Panc1 (cell line): ENCODE measurements at regions of chr7 and their contacts with region 1.

Region 1: DNA sequence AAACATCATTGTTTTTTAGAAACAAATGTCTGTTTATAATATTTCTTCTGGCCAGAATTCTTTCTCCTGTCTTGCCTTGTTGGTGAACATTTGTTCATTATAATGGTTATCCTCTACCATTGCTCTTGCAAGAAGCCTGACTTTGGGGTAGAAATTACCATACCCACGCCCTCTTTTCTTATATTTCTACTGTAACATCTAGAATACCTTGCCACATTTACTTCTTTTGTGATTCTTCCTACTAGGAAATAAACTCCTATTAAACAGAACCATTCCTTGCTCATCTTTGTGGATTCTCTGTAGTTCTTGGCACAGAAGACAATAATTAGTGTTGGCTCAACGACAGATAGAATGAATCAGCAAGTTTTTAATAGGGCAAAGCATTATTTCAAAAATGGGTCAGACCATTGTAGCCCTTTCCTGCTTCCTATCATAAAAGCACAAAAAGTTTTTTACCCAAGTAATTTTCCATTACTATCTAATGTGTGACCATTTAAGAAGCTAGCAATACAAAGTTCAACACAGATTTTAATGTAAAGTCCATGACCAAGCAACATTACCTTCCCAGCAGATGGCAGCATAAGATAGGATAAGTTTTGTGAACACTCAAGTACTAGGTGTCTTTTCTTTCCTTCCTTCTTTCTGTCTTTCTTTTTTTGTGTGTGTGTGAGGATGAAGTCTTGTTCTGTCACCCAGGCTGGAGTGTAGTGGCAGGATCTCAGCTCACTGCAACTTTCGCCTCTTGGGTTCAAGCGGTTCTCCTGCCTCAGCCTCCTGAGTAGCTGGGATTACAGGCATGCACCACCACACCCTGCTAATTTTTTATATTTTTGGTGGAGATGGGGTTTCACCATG is 270.4 kb downstream of the HGF start:
- DNase-seq: peak; percentile 85
- ATAC-seq: peak; percentile 93
- H3K4me3 ChIP-seq: no peak overlapping the region
- H3K27ac ChIP-seq: peak overlapping the region; percentile 36; the same call in 1 of the 2 replicates
- H3K4me1 ChIP-seq: peaks cover 6% of the 10 kb centered on the region
- H3K27me3 ChIP-seq: no peaks in the 10 kb centered on the region
- CTCF ChIP-seq: peak; percentile 67

Region 2: DNA sequence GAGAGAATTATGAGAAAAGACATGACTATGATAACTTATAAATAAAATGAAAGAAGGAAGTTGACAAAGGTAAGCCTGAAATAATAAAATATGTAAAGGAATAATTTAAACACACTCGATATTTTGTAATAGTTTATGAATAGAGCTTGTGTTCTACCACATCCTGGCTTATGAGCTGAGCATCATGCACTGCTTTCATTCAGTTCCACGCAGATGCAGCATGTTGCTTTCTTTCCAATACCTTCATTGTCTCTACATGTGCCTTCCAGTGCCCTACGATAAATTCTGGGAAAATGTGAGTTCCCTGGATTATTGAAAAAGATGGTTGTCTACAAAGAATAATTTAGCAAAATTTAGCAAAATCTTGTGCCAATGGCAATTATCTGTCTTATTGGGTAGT is 181.7 kb before region 1 on chr7:
- CTCF ChIA-PET with region 1: no interaction called
- POLR2A ChIA-PET with region 1: no interaction called
- in situ Hi-C with region 1: no loop called
- intact Hi-C with region 1: no loop called
- DNase-seq: no peak
- ATAC-seq: no peak
- H3K4me3 ChIP-seq: no peak overlapping the region
- H3K27ac ChIP-seq: peak overlapping the region; percentile 49; the same call in 1 of the 2 replicates
- H3K4me1 ChIP-seq: peaks cover 7% of the 10 kb centered on the region
- H3K27me3 ChIP-seq: no peaks in the 10 kb centered on the region
- CTCF ChIP-seq: no peak

Region 3: DNA sequence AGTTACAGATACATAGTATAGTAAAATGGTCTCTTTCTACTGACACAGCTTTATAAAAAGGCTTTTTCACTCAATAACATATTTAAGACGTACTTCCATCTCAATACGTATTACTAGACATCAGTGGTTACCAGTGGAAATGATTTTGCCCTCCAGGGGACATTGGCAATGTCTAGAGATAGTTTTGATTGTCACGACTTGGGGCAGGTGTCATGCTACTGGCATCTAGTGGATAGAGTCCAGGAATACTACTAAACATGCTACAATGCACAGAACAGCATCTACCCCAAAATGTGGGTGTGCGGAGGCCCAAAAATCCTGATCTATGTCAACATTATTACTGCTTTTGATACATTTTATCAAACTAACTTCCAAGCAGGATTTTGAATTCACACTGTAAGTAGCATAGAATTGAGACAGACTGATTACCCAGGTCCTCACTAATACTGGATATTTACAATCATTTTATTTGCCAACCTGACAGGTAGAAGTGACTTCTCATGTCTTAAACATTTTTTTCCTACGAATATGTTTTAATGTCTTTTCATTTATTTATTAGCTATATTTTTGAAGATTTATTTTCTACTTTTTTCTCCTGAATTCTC is 216.6 kb after region 1 on chr7:
- CTCF ChIA-PET with region 1: interaction called, 7 read pairs
- POLR2A ChIA-PET with region 1: no interaction called
- in situ Hi-C with region 1: no loop called
- intact Hi-C with region 1: loop called (anchors 1 kb)
- DNase-seq: peak; percentile 81
- ATAC-seq: peak; percentile 90
- H3K4me3 ChIP-seq: no peak overlapping the region
- H3K27ac ChIP-seq: no peak overlapping the region
- H3K4me1 ChIP-seq: no peaks in the 10 kb centered on the region; the same call in 1 of the 2 replicates
- H3K27me3 ChIP-seq: no peaks in the 10 kb centered on the region
- CTCF ChIP-seq: peak; percentile 79

Region 4: DNA sequence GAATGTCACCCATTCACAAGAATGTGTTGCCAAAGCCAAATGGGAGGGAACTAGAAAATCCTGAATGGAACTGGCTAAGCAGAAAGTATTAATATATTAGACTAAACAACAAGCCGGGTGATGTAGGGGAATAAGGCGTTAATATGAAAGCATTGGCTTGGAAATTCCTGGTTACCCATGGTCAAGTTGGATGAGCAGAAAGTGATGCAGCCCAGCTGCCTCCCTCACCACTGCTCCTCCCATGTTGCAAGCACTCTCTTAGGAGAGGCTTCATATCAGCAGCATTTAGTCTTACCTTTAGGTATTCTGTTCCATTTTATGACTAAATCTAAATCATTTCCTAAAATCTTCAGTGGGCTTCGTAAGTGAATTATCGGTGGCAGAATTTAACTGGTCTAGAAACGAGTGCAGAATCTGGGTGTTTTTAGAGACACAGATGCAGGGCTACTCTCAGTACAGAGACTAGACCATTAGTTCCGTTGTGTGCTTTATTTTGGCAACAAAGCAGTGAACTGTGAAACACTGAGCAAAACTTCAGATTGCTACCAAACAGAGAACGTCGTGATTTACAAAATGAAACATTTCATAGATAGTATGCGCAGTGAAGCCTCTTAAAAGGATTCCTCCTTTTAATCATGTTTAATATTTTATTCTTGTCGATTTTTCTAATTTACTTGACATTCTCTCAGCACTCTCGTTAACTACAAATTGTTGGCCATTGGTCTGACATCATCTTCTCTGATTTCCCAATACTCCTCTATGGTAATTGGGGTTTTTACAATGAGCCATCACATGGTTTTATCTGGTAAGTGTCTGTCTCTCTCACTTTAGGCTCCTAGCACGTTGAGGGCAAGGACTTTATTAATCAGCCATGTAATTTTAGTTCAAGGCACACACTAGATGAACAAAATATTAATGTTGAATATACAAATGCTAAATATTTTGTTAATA is 292.4 kb after region 1 on chr7:
- CTCF ChIA-PET with region 1: no interaction called
- POLR2A ChIA-PET with region 1: no interaction called
- in situ Hi-C with region 1: no loop called
- intact Hi-C with region 1: no loop called
- DNase-seq: no peak
- ATAC-seq: no peak
- H3K4me3 ChIP-seq: no peak overlapping the region
- H3K27ac ChIP-seq: no peak overlapping the region
- H3K4me1 ChIP-seq: no peaks in the 10 kb centered on the region
- H3K27me3 ChIP-seq: no peaks in the 10 kb centered on the region
- CTCF ChIP-seq: no peak

Region 5: GRCh38 chr7:81956520-81956919 is 457.0 kb after region 1 on chr7:
- CTCF ChIA-PET with region 1: interaction called, 10 read pairs
- POLR2A ChIA-PET with region 1: no interaction called
- in situ Hi-C with region 1: no loop called
- intact Hi-C with region 1: loop called (anchors 1 kb)
- DNase-seq: peak; percentile 18
- ATAC-seq: peak; percentile 76; the same call in 1 of the 2 replicates
- H3K4me3 ChIP-seq: no peak overlapping the region
- H3K27ac ChIP-seq: no peak overlapping the region
- H3K4me1 ChIP-seq: no peaks in the 10 kb centered on the region
- H3K27me3 ChIP-seq: no peaks in the 10 kb centered on the region
- CTCF ChIP-seq: peak; percentile 62; the same call in 1 of the 2 replicates

Region 6: GRCh38 chr7:82017334-82017943 is 518.0 kb after region 1 on chr7:
- CTCF ChIA-PET with region 1: interaction called, 7 read pairs
- POLR2A ChIA-PET with region 1: no interaction called
- in situ Hi-C with region 1: no loop called
- intact Hi-C with region 1: loop called (anchors 1 kb)
- DNase-seq: peak; percentile 38
- ATAC-seq: peak; percentile 62; the same call in 1 of the 2 replicates
- H3K4me3 ChIP-seq: no peak overlapping the region
- H3K27ac ChIP-seq: no peak overlapping the region
- H3K4me1 ChIP-seq: no peaks in the 10 kb centered on the region
- H3K27me3 ChIP-seq: no peaks in the 10 kb centered on the region
- CTCF ChIP-seq: peak; percentile 61; the same call in 1 of the 2 replicates

Region 7: DNA sequence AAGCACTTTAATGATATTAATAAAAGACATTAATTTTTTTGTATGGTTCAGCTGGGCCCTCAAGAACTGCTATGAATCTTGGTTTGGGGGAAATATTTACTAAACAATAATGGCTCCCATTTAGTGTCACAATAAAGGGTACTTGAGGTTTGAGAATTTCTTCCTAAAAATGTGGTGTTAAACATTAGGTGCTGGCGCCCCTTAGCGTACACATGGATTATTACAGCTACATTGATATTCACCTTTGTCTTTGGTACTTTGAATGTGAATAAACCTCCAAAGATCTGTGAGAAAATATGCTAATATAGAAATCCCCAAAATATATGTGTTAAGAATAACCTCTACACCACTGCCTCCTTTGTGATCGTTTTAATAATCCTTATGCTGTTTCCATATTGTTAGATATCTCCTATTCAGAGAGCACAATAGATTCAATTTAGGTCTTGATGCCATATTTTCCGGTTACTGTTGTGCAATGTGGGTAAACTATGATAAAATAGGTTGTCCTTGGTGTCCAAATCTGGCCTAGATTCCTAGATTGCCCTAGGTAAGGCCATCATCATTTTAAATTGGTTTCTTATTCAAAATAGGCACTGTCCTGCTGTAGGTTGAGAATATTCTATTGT is 1105.9 kb after region 1 on chr7:
- CTCF ChIA-PET with region 1: no interaction called
- POLR2A ChIA-PET with region 1: no interaction called
- in situ Hi-C with region 1: no loop called
- intact Hi-C with region 1: loop called (anchors 10 kb)
- DNase-seq: no peak
- ATAC-seq: no peak
- H3K4me3 ChIP-seq: no peak overlapping the region
- H3K27ac ChIP-seq: no peak overlapping the region
- H3K4me1 ChIP-seq: no peaks in the 10 kb centered on the region
- H3K27me3 ChIP-seq: no peaks in the 10 kb centered on the region
- CTCF ChIP-seq: peak; percentile 79

Region 8: GRCh38 chr7:82729172-82730030 is 1229.9 kb after region 1 on chr7:
- CTCF ChIA-PET with region 1: interaction called, 7 read pairs
- POLR2A ChIA-PET with region 1: no interaction called
- in situ Hi-C with region 1: no loop called
- intact Hi-C with region 1: loop called (anchors 2 kb)
- DNase-seq: peak; percentile 33
- ATAC-seq: no peak
- H3K4me3 ChIP-seq: no peak overlapping the region
- H3K27ac ChIP-seq: no peak overlapping the region
- H3K4me1 ChIP-seq: no peaks in the 10 kb centered on the region
- H3K27me3 ChIP-seq: no peaks in the 10 kb centered on the region
- CTCF ChIP-seq: peak; percentile 75; the same call in 1 of the 2 replicates